WTC11 (cell line): ENCODE measurements at regions of chr12 and their contacts with region 1.

Region 1: GRCh38 chr12:107670999-107671643 is 14.5 kb upstream of the PWP1 start:
- DNase-seq: peak; percentile 72
- ATAC-seq: peak; percentile 90
- H3K4me3 Mint-ChIP-seq: no peak overlapping the region
- H3K27ac Mint-ChIP-seq: no peak overlapping the region
- H3K4me1 Mint-ChIP-seq: peaks cover 14% of the 10 kb centered on the region
- H3K27me3 Mint-ChIP-seq: 0 out of 2 replicates have a peak, but pooled peaks cover 3% of the 10 kb centered on the region
- CTCF ChIP-seq: peak; percentile 80

Region 2: GRCh38 chr12:106814714-106815113 is 856.4 kb before region 1 on chr12:
- CTCF ChIA-PET with region 1: no interaction called
- POLR2A ChIA-PET with region 1: no interaction called
- DNase-seq: no peak
- ATAC-seq: no peak
- H3K4me3 Mint-ChIP-seq: no peak overlapping the region
- H3K27ac Mint-ChIP-seq: no peak overlapping the region; the same call in 1 of the 2 replicates
- H3K4me1 Mint-ChIP-seq: peaks cover 32% of the 10 kb centered on the region
- H3K27me3 Mint-ChIP-seq: no peaks in the 10 kb centered on the region
- CTCF ChIP-seq: no peak

Region 3: DNA sequence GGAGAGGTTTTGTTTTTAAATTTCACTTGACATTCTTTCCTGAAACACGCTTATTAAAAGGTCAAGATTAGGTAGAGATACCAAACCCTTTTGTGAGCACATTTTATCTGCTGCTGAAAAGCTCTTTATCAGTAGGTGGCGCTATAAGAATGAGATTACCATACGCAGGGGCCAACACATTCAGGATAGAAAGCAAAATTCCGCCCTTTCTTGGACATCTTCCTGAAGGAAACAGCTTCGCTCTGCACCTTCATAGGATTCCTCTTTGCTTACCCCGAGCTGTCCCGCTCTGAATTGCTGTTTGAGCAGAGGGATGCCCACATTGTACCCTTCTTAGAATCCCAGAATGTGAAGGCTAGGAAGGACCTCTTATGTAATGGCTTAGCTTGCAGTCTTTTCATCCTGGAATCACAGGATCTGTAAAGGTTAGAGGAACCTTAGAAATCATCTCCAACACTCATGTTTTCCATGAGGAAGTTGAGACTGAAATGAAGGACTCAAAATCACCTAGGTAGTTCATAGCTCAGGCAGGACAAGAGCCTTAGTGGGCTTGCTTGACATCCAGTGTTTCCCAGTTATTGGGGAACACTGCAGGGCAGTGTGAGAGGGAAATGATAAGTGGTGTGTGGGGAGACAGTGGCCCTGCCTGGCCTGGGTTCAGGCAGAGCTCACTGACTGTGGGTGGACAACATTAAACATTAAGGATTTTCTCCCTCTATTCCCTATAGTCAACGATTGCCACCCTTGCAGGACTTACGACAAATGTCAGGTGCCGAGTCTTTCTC is 539.1 kb before region 1 on chr12:
- CTCF ChIA-PET with region 1: interaction called, 11 read pairs
- POLR2A ChIA-PET with region 1: no interaction called
- DNase-seq: no peak
- ATAC-seq: peak; percentile 52
- H3K4me3 Mint-ChIP-seq: no peak overlapping the region
- H3K27ac Mint-ChIP-seq: no peak overlapping the region
- H3K4me1 Mint-ChIP-seq: peaks cover 34% of the 10 kb centered on the region
- H3K27me3 Mint-ChIP-seq: peaks cover 6% of the 10 kb centered on the region; the same call in 1 of the 2 replicates
- CTCF ChIP-seq: peak; percentile 37; the same call in 1 of the 2 replicates

Region 4: GRCh38 chr12:107554941-107555340 is 116.2 kb before region 1 on chr12:
- CTCF ChIA-PET with region 1: no interaction called
- POLR2A ChIA-PET with region 1: no interaction called
- DNase-seq: no peak
- ATAC-seq: no peak
- H3K4me3 Mint-ChIP-seq: no peak overlapping the region
- H3K27ac Mint-ChIP-seq: no peak overlapping the region
- H3K4me1 Mint-ChIP-seq: peaks cover under 1% of the 10 kb centered on the region; the same call in 1 of the 2 replicates
- H3K27me3 Mint-ChIP-seq: no peaks in the 10 kb centered on the region
- CTCF ChIP-seq: no peak

Region 5: GRCh38 chr12:107645630-107646333 is 25.3 kb before region 1 on chr12:
- CTCF ChIA-PET with region 1: interaction called, 18 read pairs
- POLR2A ChIA-PET with region 1: no interaction called
- DNase-seq: peak; percentile 75
- ATAC-seq: peak; percentile 86
- H3K4me3 Mint-ChIP-seq: peak overlapping the region; percentile 42
- H3K27ac Mint-ChIP-seq: peak overlapping the region; percentile 99
- H3K4me1 Mint-ChIP-seq: peaks cover 26% of the 10 kb centered on the region
- H3K27me3 Mint-ChIP-seq: no peaks in the 10 kb centered on the region
- CTCF ChIP-seq: no peak

Region 6: GRCh38 chr12:107685360-107686248 is 14.5 kb after region 1 on chr12 and contains the start of gene PWP1:
- CTCF ChIA-PET with region 1: interaction called, 42 read pairs
- POLR2A ChIA-PET with region 1: no interaction called
- DNase-seq: peak; percentile 94
- ATAC-seq: peak; percentile 88
- H3K4me3 Mint-ChIP-seq: peak within 1 kb of the TSS; percentile 98
- H3K27ac Mint-ChIP-seq: peak within 1 kb of the TSS; percentile 100
- H3K4me1 Mint-ChIP-seq: peaks cover 14% of the 10 kb centered on the region
- H3K27me3 Mint-ChIP-seq: no peaks in the 10 kb centered on the region
- CTCF ChIP-seq: no peak
- total RNA-seq, gene PWP1: 42.1 to 54.2 TPM (median 46.2 TPM) in 3 replicates

Region 7: DNA sequence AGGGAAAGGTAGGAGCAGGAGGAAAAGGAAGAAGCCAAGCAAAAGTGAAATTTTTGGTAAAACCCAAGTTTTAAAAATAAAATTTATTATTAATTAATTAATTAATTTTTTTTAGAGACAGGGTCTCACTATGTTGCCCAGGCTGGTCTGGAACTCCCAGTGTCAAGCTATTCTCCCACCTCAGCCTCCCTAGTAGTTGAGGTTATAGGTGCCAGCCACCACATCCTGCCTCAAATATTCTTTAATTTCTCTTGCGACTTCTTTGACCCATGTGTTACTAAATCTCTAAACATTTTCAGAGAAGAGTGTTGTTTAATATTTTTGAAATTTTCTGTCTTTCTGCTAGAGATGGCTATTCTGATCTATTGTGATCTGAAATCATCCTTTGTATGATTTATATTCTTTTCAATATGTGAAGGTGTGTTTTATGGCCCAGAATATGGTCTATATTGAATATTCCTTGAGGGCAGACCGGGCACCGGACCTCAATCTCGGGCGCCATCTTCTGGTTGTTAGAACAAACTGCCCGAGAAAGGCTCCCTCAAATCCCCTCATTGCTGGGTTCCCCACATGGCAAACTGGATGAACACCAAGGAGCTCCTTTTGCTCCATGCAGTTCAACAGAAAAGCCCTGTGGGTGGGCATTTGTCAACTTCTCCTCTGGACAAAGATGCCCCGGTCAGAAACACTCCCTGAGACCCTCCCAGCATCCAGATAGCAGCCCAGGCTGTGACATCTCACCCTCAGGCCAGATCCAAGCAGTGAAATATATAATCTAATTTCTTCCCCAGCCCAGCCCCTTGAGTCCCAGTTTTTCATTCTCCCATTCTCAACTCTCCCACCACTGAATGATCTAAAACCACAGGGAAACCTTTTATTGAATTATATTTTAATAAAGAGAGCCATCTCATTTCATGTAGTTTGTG is 213.9 kb after region 1 on chr12:
- CTCF ChIA-PET with region 1: interaction called, 17 read pairs
- POLR2A ChIA-PET with region 1: no interaction called
- DNase-seq: peak; percentile 62
- ATAC-seq: peak; percentile 89
- H3K4me3 Mint-ChIP-seq: no peak overlapping the region
- H3K27ac Mint-ChIP-seq: no peak overlapping the region
- H3K4me1 Mint-ChIP-seq: no peaks in the 10 kb centered on the region
- H3K27me3 Mint-ChIP-seq: no peaks in the 10 kb centered on the region; the same call in 1 of the 2 replicates
- CTCF ChIP-seq: peak; percentile 51; the same call in 1 of the 2 replicates